ENCODE measurements at regions of chr18 and their contacts with region 1.

Region 1: DNA sequence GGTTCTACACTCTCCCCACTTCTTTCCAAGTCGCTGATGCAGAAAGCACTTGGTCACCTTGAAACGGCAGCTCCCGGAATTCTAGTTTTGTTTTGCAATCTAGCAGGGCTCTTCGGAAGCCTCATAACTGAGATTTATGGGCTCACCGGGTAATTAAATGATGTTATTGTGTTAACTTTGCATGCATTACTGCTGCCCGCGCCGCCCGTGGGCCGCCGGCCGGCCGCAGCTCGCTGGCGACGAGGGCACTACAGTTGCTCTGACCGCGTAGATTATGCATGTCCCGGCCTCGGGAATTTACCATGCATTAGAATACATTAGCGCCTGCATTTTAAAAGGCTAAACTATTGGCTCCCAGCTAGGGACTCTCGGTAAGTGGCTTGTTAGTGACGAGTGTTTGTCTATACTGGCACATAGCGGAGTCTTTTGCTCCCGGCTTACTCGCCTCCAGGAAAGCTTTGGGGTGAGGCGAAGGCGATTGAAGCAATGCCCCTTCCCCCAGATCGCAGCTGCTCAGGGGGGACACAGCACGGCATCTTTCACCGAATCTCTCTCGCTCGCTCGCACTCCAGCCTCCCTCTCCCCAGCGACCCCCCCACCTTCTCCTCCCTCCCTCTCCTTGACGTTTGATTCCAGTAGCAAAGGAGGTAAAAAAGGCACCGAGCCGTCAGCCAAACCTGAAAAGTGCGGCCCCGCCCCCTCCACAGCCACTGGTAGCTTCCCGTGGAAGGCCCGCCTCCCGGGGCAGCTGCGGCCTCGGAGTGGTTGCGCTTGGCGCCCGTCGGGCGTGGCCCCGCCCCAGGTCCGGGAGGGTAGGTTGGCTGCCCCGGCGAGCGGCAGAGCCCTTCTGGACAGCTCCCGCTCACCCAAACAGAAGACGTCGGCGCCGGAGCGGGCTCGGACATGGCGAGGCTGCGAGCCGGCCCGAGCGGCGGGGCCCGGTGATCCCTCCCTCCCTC is at the start of gene ONECUT2:
- DNase-seq: peak; percentile 77
- H3K4me3 Mint-ChIP-seq: peak within 1 kb of the TSS; percentile 51
- H3K27ac Mint-ChIP-seq: no peak within 1 kb of the TSS
- H3K4me1 Mint-ChIP-seq: peaks cover 53% of the 10 kb centered on the region
- H3K27me3 Mint-ChIP-seq: peaks cover 88% of the 10 kb centered on the region
- total RNA-seq, gene ONECUT2: not detected

Region 2: GRCh38 chr18:55589625-55590291 is 1845.1 kb before region 1 on chr18:
- CTCF ChIA-PET with region 1: no interaction called
- intact Hi-C with region 1: loop called (anchors 5 kb)
- DNase-seq: peak; percentile 86
- H3K4me3 Mint-ChIP-seq: peak overlapping the region; percentile 70
- H3K27ac Mint-ChIP-seq: no peak overlapping the region
- H3K4me1 Mint-ChIP-seq: peaks cover 19% of the 10 kb centered on the region
- H3K27me3 Mint-ChIP-seq: peaks cover 59% of the 10 kb centered on the region

Region 3: DNA sequence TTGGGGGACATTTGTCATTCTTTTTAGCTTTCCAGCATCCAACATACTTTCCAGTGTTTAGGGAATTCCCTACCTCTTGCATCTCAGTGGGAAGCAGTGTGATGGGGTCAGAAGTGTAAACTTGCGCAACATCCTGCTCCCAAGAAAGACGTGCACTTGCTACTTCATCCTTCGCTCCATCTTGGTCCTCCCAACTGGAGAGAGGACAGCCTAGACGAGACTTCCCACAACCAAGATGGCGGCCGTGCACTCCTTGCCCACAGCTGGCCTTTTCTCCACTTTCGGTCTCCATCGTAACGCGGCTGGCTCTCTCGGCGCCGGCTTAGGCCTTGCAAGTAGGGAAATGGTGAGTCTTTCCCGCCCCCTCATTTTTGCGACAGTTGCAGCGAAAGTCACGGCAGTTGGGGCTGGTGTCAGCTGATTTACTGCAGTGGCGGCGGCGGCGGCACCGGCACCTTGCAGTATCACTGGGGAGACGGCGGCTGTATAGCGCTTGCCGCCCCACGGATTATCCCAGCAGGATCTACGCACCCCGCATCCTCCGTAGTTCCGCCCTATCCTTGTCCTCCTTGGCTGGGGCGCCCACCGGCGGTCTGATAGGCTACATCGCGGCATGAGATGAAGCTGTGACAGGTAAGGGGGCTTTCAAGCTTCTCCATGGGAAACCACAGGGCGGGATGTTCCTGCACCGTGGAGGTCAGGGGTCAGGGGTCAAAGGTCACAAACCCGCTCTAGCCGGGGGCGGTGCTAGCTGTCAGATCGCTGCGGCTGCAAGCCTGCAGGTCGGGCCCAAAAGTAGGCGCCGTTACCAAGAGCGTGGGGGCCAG is 783.7 kb before region 1 on chr18 and contains the start of gene WDR7:
- CTCF ChIA-PET with region 1: no interaction called
- intact Hi-C with region 1: loop called (anchors 5 kb)
- DNase-seq: peak; percentile 97
- H3K4me3 Mint-ChIP-seq: peak within 1 kb of the TSS; percentile 93
- H3K27ac Mint-ChIP-seq: peak within 1 kb of the TSS; percentile 95
- H3K4me1 Mint-ChIP-seq: peaks cover 42% of the 10 kb centered on the region
- H3K27me3 Mint-ChIP-seq: no peaks in the 10 kb centered on the region
- total RNA-seq, gene WDR7: 17.3 to 19.5 TPM

Region 4: DNA sequence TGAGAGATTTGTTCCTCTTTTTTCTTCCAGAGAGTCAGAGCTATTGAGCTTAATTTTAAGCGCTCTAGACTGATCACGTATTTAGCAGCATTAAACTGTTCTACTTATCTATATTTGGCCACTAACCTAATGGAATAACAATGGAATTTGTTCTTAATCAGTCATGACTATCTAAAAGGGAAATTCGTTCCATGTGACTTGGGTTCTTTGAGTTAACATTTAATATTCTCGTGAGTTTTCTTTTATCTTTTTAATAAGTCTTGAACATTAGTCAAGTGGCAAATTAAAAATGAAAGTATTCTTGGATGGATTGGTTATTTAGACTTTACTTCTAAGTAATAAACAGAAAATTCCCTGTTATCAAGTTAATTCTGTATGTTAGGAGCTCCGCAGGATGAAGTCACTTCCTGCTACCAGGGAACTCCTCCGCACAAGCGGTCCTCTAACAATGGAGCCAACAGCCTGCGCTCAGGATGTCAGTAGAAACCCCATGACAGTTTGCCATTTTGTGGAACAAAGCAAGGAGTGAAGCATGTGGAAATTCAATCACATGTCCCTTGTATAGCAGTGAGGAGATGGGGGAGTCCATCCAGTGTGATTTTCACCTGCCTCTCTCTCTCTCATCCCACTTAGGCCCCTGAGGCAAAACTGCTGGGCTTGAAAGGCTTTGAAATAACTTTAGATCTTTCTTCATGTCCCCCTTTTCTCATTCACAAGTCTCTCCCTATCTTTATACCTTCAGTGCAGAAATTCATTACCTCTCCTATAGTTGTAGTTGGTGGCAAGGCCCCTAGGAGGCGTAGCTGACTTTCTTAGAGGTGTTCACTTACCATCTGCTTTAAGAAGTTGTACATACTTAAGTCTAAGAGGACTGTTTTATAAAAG is 645.6 kb before region 1 on chr18:
- CTCF ChIA-PET with region 1: no interaction called
- intact Hi-C with region 1: loop called (anchors 2 kb)
- DNase-seq: peak; percentile 58
- H3K4me3 Mint-ChIP-seq: no peak overlapping the region
- H3K27ac Mint-ChIP-seq: no peak overlapping the region
- H3K4me1 Mint-ChIP-seq: no peaks in the 10 kb centered on the region
- H3K27me3 Mint-ChIP-seq: no peaks in the 10 kb centered on the region

Region 5: GRCh38 chr18:57004366-57005121 is 430.3 kb before region 1 on chr18:
- CTCF ChIA-PET with region 1: interaction called, 3 read pairs
- intact Hi-C with region 1: loop called (anchors 5 kb)
- DNase-seq: no peak
- H3K4me3 Mint-ChIP-seq: no peak overlapping the region
- H3K27ac Mint-ChIP-seq: no peak overlapping the region
- H3K4me1 Mint-ChIP-seq: peaks cover 23% of the 10 kb centered on the region
- H3K27me3 Mint-ChIP-seq: no peaks in the 10 kb centered on the region

Region 6: GRCh38 chr18:59268721-59269562 is 1834.1 kb after region 1 on chr18:
- CTCF ChIA-PET with region 1: no interaction called
- intact Hi-C with region 1: loop called (anchors 5 kb)
- DNase-seq: peak; percentile 68
- H3K4me3 Mint-ChIP-seq: peak overlapping the region; percentile 39
- H3K27ac Mint-ChIP-seq: no peak overlapping the region
- H3K4me1 Mint-ChIP-seq: peaks cover 29% of the 10 kb centered on the region
- H3K27me3 Mint-ChIP-seq: peaks cover 81% of the 10 kb centered on the region

Measured in activated naive CD4-positive, alpha-beta T cell treated with anti-CD3 and anti-CD28 coated beads for 36 hours (primary cell).